ENCODE measurements at regions of chrX and their contacts with region 1.

Region 1: DNA sequence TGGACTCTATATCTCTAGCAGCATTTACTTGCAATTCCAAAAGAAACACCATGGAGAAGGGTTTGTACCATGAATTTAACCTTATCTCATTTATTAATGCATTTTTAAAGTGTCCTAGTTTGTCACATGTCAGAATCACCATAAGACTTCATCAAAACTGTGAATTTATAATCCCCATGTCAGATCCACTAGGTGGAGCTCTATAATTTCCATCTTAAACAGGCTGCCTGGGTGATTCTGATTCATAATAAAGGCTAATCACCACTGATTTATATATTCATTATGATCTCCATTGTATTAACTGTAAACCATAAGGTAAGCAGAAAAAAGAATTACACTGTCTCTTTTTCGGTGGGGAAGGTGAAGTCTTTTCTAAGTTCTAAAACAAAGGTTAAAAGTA is 4.0 kb downstream of the TCEAL2 start:
- DNase-seq: peak in 2 of 5 donors; percentile 6 to 9
- H3K4me3 ChIP-seq: no peak overlapping the region
- H3K4me3 Mint-ChIP-seq: no peak overlapping the region
- H3K27ac ChIP-seq: no peak overlapping the region
- H3K27ac Mint-ChIP-seq: no peak overlapping the region
- H3K4me1 ChIP-seq: no peaks in the 10 kb centered on the region
- H3K4me1 Mint-ChIP-seq: peaks cover 4 to 5% (median 5%) of the 10 kb centered on the region in 4 donors
- H3K27me3 ChIP-seq: peaks cover 3% of the 10 kb centered on the region
- H3K27me3 Mint-ChIP-seq: peaks cover 22 to 34% of the 10 kb centered on the region in 2 donors

Region 2: DNA sequence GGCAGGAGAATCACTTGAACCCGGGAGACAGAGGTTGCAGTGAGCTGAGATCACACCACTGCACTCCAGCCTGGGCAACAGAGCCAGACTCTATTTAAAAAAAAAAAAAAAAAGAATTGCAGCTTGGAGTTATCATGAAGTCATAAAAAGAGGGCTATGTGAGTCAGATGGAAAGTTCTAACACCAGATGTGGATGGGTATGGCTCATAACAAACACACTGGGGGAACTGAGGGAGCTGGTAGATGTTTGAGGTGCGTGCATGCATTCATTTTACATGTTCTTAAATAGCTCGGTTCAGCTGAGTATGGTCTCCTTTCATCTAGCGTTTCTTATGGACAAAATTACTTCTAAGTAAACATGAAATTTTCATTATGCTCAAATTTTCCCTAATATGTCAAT is 1089.3 kb before region 1 on chrX:
- CTCF ChIA-PET with region 1: no interaction called
- POLR2A ChIA-PET with region 1: no interaction called
- intact Hi-C with region 1: no loop called
- DNase-seq: no peak
- H3K4me3 ChIP-seq: no peak overlapping the region
- H3K4me3 Mint-ChIP-seq: no peak overlapping the region
- H3K27ac ChIP-seq: no peak overlapping the region
- H3K27ac Mint-ChIP-seq: no peak overlapping the region
- H3K4me1 ChIP-seq: no peaks in the 10 kb centered on the region
- H3K4me1 Mint-ChIP-seq: peaks cover 0 to 6% (median 4%) of the 10 kb centered on the region in 4 donors
- H3K27me3 ChIP-seq: no peaks in the 10 kb centered on the region
- H3K27me3 Mint-ChIP-seq: no peaks in the 10 kb centered on the region

Region 3: GRCh38 chrX:102899940-102900916 is 770.8 kb after region 1 on chrX:
- CTCF ChIA-PET with region 1: interaction called, 6 read pairs
- POLR2A ChIA-PET with region 1: no interaction called
- intact Hi-C with region 1: loop called (anchors 1 kb)
- DNase-seq: peak; percentile 65 to 71 (median 69)
- H3K4me3 ChIP-seq: no peak overlapping the region
- H3K4me3 Mint-ChIP-seq: peak overlapping the region in 5 of 8 donors; percentile 10 to 50 (median 15)
- H3K27ac ChIP-seq: no peak overlapping the region
- H3K27ac Mint-ChIP-seq: no peak overlapping the region
- H3K4me1 ChIP-seq: peaks cover 7% of the 10 kb centered on the region
- H3K4me1 Mint-ChIP-seq: peaks cover 5 to 8% (median 6%) of the 10 kb centered on the region in 4 donors
- H3K27me3 ChIP-seq: no peaks in the 10 kb centered on the region
- H3K27me3 Mint-ChIP-seq: no peaks in the 10 kb centered on the region

Measured in CD4-positive, alpha-beta memory T cell (primary cell).